GM12878 (cell line): ENCODE measurements at regions of chr5 and their contacts with region 1.

Region 1: DNA sequence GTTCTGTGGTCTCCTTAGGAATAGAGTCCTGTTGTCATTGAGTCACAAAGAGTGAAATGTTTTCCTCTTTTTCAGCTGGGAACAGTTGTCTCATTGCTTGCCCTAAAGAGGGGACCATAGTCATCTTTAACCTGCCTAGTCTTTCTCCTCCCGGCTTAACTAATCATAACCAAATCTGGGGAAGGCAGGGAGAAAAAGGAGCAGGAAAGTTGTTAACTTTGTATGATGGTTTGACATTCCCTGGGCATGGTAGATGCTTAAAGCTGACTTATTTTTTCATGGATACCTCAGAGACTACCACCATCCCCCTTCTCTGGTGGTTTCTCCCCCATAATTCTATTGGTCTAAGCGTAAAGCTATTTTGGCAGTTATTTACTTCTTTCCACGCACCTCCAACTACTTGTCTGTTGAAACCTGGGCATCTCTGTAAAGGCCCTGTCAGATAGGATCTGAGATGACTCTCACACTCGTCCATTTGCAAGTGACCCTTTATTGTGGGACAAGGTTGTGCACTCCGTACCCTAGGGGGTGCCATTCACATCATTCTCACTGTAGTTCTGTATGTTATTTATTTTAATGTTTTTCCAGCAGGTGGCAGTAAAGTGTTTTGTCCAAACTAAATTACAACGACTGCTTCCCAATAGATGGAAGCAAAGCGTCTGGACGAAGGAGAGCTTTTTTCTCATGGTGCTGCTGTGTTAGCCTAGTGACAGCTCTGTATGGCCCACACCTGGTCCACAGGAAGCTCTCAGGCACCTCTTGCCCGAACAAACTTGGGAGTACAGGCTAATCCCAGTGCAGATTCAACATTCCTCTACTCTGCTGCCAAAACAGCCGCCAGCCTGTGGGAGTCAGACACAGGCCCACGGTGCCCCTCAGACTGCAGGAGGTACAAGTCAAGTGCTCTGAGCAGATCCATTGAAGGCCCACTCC is 3.0 kb upstream of the FAM13B start:
- DNase-seq: peak; percentile 63
- ATAC-seq: peak; percentile 56
- H3K4me3 ChIP-seq: no peak overlapping the region
- H3K27ac ChIP-seq: no peak overlapping the region
- H3K4me1 ChIP-seq: peaks cover 22% of the 10 kb centered on the region
- H3K27me3 ChIP-seq: no peaks in the 10 kb centered on the region
- CTCF ChIP-seq: peak; percentile 74 to 99 (median 96)
- EP300 ChIP-seq: no peak
- POLR2A ChIP-seq: no peak
- RAD21 ChIP-seq: peak; percentile 69

Region 2: GRCh38 chr5:138024117-138024516 is 11.8 kb before region 1 on chr5:
- CTCF ChIA-PET with region 1: interaction called, 23 read pairs
- POLR2A ChIA-PET with region 1: interaction called, 9 read pairs
- RAD21 ChIA-PET with region 1: interaction called, 9 read pairs
- SMC1A ChIA-PET with region 1: interaction called, 19 read pairs
- in situ Hi-C with region 1: no loop called
- intact Hi-C with region 1: no loop called
- DNase-seq: no peak
- ATAC-seq: no peak
- H3K4me3 ChIP-seq: no peak overlapping the region
- H3K27ac ChIP-seq: no peak overlapping the region
- H3K4me1 ChIP-seq: peaks cover 13% of the 10 kb centered on the region
- H3K27me3 ChIP-seq: no peaks in the 10 kb centered on the region
- CTCF ChIP-seq: no peak
- EP300 ChIP-seq: no peak
- POLR2A ChIP-seq: no peak
- RAD21 ChIP-seq: no peak

Region 3: GRCh38 chr5:138065102-138065501 is 29.2 kb after region 1 on chr5:
- CTCF ChIA-PET with region 1: interaction called, 398 read pairs
- POLR2A ChIA-PET with region 1: interaction called, 4 read pairs
- RAD21 ChIA-PET with region 1: interaction called, 60 read pairs
- SMC1A ChIA-PET with region 1: interaction called, 207 read pairs
- in situ Hi-C with region 1: loop called (anchors 5 kb)
- intact Hi-C with region 1: loop called (anchors 1 kb)
- DNase-seq: no peak
- ATAC-seq: peak; percentile 66
- H3K4me3 ChIP-seq: no peak overlapping the region
- H3K27ac ChIP-seq: no peak overlapping the region
- H3K4me1 ChIP-seq: no peaks in the 10 kb centered on the region
- H3K27me3 ChIP-seq: no peaks in the 10 kb centered on the region
- CTCF ChIP-seq: peak; percentile 45 to 66 (median 45); a peak in 5 of 6 replicates
- EP300 ChIP-seq: no peak
- POLR2A ChIP-seq: no peak
- RAD21 ChIP-seq: peak; percentile 33; the same call in 1 of the 2 replicates

Region 4: GRCh38 chr5:138128334-138128733 is 92.5 kb after region 1 on chr5:
- CTCF ChIA-PET with region 1: interaction called, 52 read pairs
- POLR2A ChIA-PET with region 1: no interaction called
- RAD21 ChIA-PET with region 1: interaction called, 15 read pairs
- SMC1A ChIA-PET with region 1: interaction called, 12 read pairs
- in situ Hi-C with region 1: no loop called
- intact Hi-C with region 1: loop called (anchors 1 kb)
- DNase-seq: no peak
- ATAC-seq: no peak
- H3K4me3 ChIP-seq: no peak overlapping the region
- H3K27ac ChIP-seq: no peak overlapping the region
- H3K4me1 ChIP-seq: no peaks in the 10 kb centered on the region
- H3K27me3 ChIP-seq: no peaks in the 10 kb centered on the region
- CTCF ChIP-seq: no peak
- EP300 ChIP-seq: no peak
- POLR2A ChIP-seq: no peak
- RAD21 ChIP-seq: no peak

Region 5: DNA sequence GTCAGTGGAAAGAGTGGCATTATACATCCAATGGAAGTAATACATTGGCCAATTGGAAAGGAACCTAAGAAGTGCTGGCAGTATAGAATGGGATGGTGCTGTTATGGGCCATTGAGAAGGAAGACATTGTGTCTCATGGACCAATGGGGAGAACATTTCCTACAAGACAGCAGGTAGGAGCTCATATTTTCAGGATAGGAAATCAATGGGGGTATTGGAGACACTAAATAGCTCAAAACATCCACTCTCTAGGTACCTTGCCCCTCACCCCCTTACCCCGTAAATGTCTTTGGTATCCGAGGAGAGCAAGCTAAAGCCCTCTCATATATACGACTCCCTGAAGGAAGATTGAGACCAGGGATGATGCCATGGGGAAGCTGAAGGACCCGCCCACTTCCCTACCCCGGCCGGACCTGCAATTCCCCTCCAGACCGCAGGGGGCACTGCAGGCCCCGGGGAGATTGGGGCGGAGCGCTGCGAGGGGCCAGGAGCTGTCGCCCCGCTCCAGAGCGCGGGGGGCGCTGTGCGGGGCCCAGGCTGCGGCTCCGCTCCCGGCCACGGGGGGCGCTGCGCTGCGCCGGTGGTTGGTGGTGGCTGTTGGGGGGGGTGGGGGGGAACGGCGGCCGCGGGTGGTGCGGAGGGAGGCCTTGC is 316.3 kb after region 1 on chr5 and contains the start of gene KDM3B:
- CTCF ChIA-PET with region 1: no interaction called
- POLR2A ChIA-PET with region 1: no interaction called
- RAD21 ChIA-PET with region 1: no interaction called
- SMC1A ChIA-PET with region 1: no interaction called
- in situ Hi-C with region 1: no loop called
- intact Hi-C with region 1: loop called (anchors 10 kb)
- DNase-seq: peak; percentile 55
- ATAC-seq: peak; percentile 77
- H3K4me3 ChIP-seq: peak within 1 kb of the TSS; percentile 99
- H3K27ac ChIP-seq: peak within 1 kb of the TSS; percentile 93
- H3K4me1 ChIP-seq: peaks cover 3% of the 10 kb centered on the region
- H3K27me3 ChIP-seq: no peaks in the 10 kb centered on the region
- CTCF ChIP-seq: peak; percentile 99 to 100 (median 99)
- EP300 ChIP-seq: no peak
- POLR2A ChIP-seq: no peak
- RAD21 ChIP-seq: peak; percentile 53
- polyA plus RNA-seq, gene KDM3B: 8.5 to 9.6 TPM